ENCODE measurements at regions of chr1 and their contacts with region 1.

Region 1: GRCh38 chr1:154558575-154559465 is at the start of gene UBE2Q1:
- DNase-seq: peak; percentile 99 to 100 (median 99)
- ATAC-seq: peak; percentile 88
- H3K4me3 ChIP-seq: peak within 1 kb of the TSS; percentile 70 to 83
- H3K4me3 Mint-ChIP-seq: peak within 1 kb of the TSS; percentile 90
- H3K27ac ChIP-seq: peak within 1 kb of the TSS; percentile 63 to 94
- H3K27ac Mint-ChIP-seq: peak within 1 kb of the TSS; percentile 89
- H3K4me1 ChIP-seq: peaks cover 20% of the 10 kb centered on the region
- H3K4me1 Mint-ChIP-seq: peaks cover 35% of the 10 kb centered on the region
- H3K27me3 ChIP-seq: no peaks in the 10 kb centered on the region
- H3K27me3 Mint-ChIP-seq: no peaks in the 10 kb centered on the region
- CTCF ChIP-seq: no peak
- total RNA-seq, gene UBE2Q1: 77.5 to 77.7 TPM

Region 2: DNA sequence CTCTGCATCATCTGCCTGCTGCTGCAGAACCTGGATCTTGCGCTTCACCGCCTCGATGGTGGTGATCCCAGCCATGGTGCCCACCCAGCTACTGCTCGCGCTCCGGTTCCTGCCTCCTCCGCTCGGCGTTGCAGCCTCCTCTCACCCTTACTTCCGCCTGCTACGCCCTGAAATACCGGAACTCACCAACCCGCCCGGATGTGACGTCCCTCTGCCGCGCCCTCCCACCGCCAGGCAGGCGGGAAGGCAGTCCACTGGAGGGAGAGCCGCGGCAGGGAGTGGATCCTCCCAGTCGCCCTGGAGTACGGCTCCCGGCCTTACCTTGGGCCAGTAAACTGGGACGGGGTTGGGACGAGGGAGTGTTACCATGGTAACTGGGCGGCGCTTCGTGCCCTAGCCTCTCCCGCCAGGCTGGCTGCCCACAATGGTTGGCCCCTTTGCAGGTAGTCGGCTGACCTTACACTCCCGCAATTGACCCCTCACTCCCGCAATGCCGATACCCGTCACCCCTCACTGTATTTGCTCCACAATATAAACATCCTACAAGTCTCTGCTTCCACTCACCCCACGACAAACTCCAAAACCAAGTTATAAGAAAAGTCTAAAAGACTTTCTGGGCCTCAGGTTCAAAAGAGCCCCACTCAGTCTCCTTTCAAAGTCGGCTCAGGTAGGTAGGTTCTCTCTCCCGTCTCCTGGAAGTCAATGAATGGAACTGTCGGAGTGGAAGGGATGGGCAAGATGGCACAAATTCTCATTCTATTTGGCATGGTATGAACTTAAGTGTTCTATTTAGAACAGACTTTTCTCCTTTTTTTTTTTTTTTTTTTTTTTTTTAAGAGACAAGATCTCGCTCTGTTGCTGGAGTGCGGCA is 375.5 kb before region 1 on chr1:
- CTCF ChIA-PET with region 1: no interaction called
- POLR2A ChIA-PET with region 1: no interaction called
- intact Hi-C with region 1: loop called (anchors 5 to 10 kb)
- DNase-seq: peak; percentile 86 to 96 (median 94)
- ATAC-seq: peak; percentile 75
- H3K4me3 ChIP-seq: peak overlapping the region; percentile 79 to 91
- H3K4me3 Mint-ChIP-seq: peak overlapping the region; percentile 100
- H3K27ac ChIP-seq: peak overlapping the region; percentile 95 to 97
- H3K27ac Mint-ChIP-seq: peak overlapping the region; percentile 95
- H3K4me1 ChIP-seq: peaks cover 42% of the 10 kb centered on the region
- H3K4me1 Mint-ChIP-seq: peaks cover 48% of the 10 kb centered on the region
- H3K27me3 ChIP-seq: no peaks in the 10 kb centered on the region
- H3K27me3 Mint-ChIP-seq: no peaks in the 10 kb centered on the region
- CTCF ChIP-seq: no peak

Region 3: GRCh38 chr1:154404984-154405761 is 153.6 kb before region 1 on chr1 and contains the start of gene IL6R:
- CTCF ChIA-PET with region 1: no interaction called
- POLR2A ChIA-PET with region 1: no interaction called
- intact Hi-C with region 1: loop called in 1 of 2 experiments (anchors 2 kb)
- DNase-seq: peak; percentile 40 to 86 (median 76)
- ATAC-seq: peak; percentile 71
- H3K4me3 ChIP-seq: peak within 1 kb of the TSS; percentile 48 to 58
- H3K4me3 Mint-ChIP-seq: peak within 1 kb of the TSS; percentile 88
- H3K27ac ChIP-seq: peak within 1 kb of the TSS; percentile 35 to 57
- H3K27ac Mint-ChIP-seq: peak within 1 kb of the TSS; percentile 93
- H3K4me1 ChIP-seq: peaks cover 64% of the 10 kb centered on the region
- H3K4me1 Mint-ChIP-seq: peaks cover 84% of the 10 kb centered on the region
- H3K27me3 ChIP-seq: no peaks in the 10 kb centered on the region
- H3K27me3 Mint-ChIP-seq: no peaks in the 10 kb centered on the region
- CTCF ChIP-seq: peak; percentile 33
- total RNA-seq, gene IL6R: 10.0 to 12.0 TPM

Region 4: DNA sequence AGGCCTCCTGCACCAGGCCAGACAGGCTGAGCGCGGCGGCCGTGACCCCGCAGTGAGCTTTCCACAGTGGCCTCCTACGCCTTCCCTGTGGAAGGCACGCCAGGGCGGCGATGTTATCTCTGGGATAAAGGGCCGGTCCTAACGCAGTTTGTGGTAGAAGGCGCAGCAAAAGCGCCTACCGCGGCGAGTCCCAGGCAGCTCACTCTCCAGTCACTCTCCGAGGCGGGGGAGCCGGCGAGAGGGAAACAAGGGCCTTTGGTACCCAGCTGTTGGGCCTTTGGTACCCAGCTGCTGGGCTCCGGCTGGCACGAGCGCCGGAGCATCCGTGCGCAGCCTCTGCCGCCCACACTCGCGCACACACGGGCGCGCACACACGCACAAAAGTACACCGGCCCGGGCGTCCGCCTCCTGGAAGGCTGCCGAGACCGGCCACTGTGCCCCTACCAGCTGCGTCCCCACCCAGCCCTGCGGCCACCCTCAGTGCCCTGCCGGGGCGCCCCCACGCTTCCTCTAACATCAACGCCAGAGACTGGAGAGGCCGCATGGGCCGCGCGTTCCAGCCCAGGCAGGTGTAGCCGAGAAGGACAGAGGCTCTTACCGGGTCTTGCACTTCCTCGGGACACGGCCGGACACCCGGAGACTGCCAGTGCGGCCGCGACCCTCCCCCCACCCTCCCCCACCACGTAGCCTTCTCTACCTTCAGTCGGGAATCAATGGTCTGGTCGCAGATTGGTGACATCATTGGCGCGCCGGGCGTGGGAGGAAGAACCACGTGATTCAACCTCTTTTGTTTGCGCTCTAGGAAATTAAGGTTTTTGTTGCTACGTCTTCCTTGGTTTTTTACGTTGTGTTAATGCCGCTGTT is 68.7 kb after region 1 on chr1:
- CTCF ChIA-PET with region 1: interaction called, 3 read pairs
- POLR2A ChIA-PET with region 1: no interaction called
- intact Hi-C with region 1: loop called (anchors 1 kb)
- DNase-seq: peak; percentile 80 to 95 (median 92)
- ATAC-seq: peak; percentile 65
- H3K4me3 ChIP-seq: peak overlapping the region; percentile 93 to 94
- H3K4me3 Mint-ChIP-seq: peak overlapping the region; percentile 98
- H3K27ac ChIP-seq: peak overlapping the region; percentile 93 to 95
- H3K27ac Mint-ChIP-seq: peak overlapping the region; percentile 100
- H3K4me1 ChIP-seq: peaks cover 20% of the 10 kb centered on the region
- H3K4me1 Mint-ChIP-seq: peaks cover 43% of the 10 kb centered on the region
- H3K27me3 ChIP-seq: no peaks in the 10 kb centered on the region
- H3K27me3 Mint-ChIP-seq: peaks cover 8% of the 10 kb centered on the region
- CTCF ChIP-seq: no peak

Region 5: GRCh38 chr1:154878371-154879022 is 319.7 kb after region 1 on chr1:
- CTCF ChIA-PET with region 1: interaction called, 18 read pairs
- POLR2A ChIA-PET with region 1: no interaction called
- intact Hi-C with region 1: loop called (anchors 1 kb)
- DNase-seq: peak; percentile 49 to 84 (median 74)
- ATAC-seq: peak; percentile 97
- H3K4me3 ChIP-seq: no peak overlapping the region
- H3K4me3 Mint-ChIP-seq: no peak overlapping the region
- H3K27ac ChIP-seq: no peak overlapping the region
- H3K27ac Mint-ChIP-seq: no peak overlapping the region
- H3K4me1 ChIP-seq: no peaks in the 10 kb centered on the region
- H3K4me1 Mint-ChIP-seq: no peaks in the 10 kb centered on the region
- H3K27me3 ChIP-seq: no peaks in the 10 kb centered on the region
- H3K27me3 Mint-ChIP-seq: no peaks in the 10 kb centered on the region
- CTCF ChIP-seq: peak; percentile 65

Region 6: GRCh38 chr1:155001675-155002463 is 443.0 kb after region 1 on chr1:
- CTCF ChIA-PET with region 1: interaction called, 4 read pairs
- POLR2A ChIA-PET with region 1: no interaction called
- intact Hi-C with region 1: loop called in 1 of 2 experiments (anchors 5 kb)
- DNase-seq: peak; percentile 95 to 99 (median 97)
- ATAC-seq: peak; percentile 77
- H3K4me3 ChIP-seq: peak overlapping the region; percentile 75 to 99
- H3K4me3 Mint-ChIP-seq: peak overlapping the region; percentile 88
- H3K27ac ChIP-seq: peak overlapping the region; percentile 64 to 90
- H3K27ac Mint-ChIP-seq: peak overlapping the region; percentile 82
- H3K4me1 ChIP-seq: peaks cover 57% of the 10 kb centered on the region
- H3K4me1 Mint-ChIP-seq: peaks cover 59% of the 10 kb centered on the region
- H3K27me3 ChIP-seq: no peaks in the 10 kb centered on the region
- H3K27me3 Mint-ChIP-seq: no peaks in the 10 kb centered on the region
- CTCF ChIP-seq: no peak

Region 7: GRCh38 chr1:155084722-155085503 is 526.1 kb after region 1 on chr1:
- CTCF ChIA-PET with region 1: no interaction called
- POLR2A ChIA-PET with region 1: no interaction called
- intact Hi-C with region 1: loop called (anchors 1 kb)
- DNase-seq: peak; percentile 80 to 94 (median 92)
- ATAC-seq: peak; percentile 73
- H3K4me3 ChIP-seq: peak overlapping the region; percentile 82 to 92
- H3K4me3 Mint-ChIP-seq: peak overlapping the region; percentile 95
- H3K27ac ChIP-seq: peak overlapping the region; percentile 57 to 85
- H3K27ac Mint-ChIP-seq: peak overlapping the region; percentile 90
- H3K4me1 ChIP-seq: peaks cover 54% of the 10 kb centered on the region
- H3K4me1 Mint-ChIP-seq: peaks cover 39% of the 10 kb centered on the region
- H3K27me3 ChIP-seq: peaks cover 39 to 44% of the 10 kb centered on the region in 2 experiments
- H3K27me3 Mint-ChIP-seq: peaks cover 30% of the 10 kb centered on the region
- CTCF ChIP-seq: peak; percentile 84

Region 8: GRCh38 chr1:155295183-155295941 is 736.5 kb after region 1 on chr1:
- CTCF ChIA-PET with region 1: no interaction called
- POLR2A ChIA-PET with region 1: no interaction called
- intact Hi-C with region 1: no loop called
- DNase-seq: no peak
- ATAC-seq: no peak
- H3K4me3 ChIP-seq: no peak overlapping the region
- H3K4me3 Mint-ChIP-seq: no peak overlapping the region
- H3K27ac ChIP-seq: no peak overlapping the region
- H3K27ac Mint-ChIP-seq: no peak overlapping the region
- H3K4me1 ChIP-seq: peaks cover 9% of the 10 kb centered on the region
- H3K4me1 Mint-ChIP-seq: peaks cover 3% of the 10 kb centered on the region
- H3K27me3 ChIP-seq: peaks cover 5 to 7% of the 10 kb centered on the region in 2 experiments
- H3K27me3 Mint-ChIP-seq: peaks cover 32% of the 10 kb centered on the region
- CTCF ChIP-seq: no peak

Measured in CD8-positive, alpha-beta T cell (primary cell).